Activated CD8-positive, alpha-beta memory T cell treated with anti-CD3 and anti-CD28 coated beads, Interleukin-2, amount 10 ng/mL, durations not matched to agents 7 days and 5 days (primary cell): ENCODE measurements at regions of chr9 and their contacts with region 1.

Region 1: GRCh38 chr9:126398403-126399058 is 71.9 kb downstream of the MVB12B start:
- DNase-seq: peak; percentile 82
- ATAC-seq: peak; percentile 25
- H3K4me3 Mint-ChIP-seq: no peak overlapping the region
- H3K27ac Mint-ChIP-seq: peak overlapping the region; percentile 84
- H3K4me1 Mint-ChIP-seq: peaks cover 84% of the 10 kb centered on the region
- H3K27me3 Mint-ChIP-seq: no peaks in the 10 kb centered on the region

Region 2: GRCh38 chr9:125407974-125408900 is 990.3 kb before region 1 on chr9:
- CTCF ChIA-PET with region 1: interaction called, 10 read pairs
- DNase-seq: peak; percentile 78
- ATAC-seq: peak; percentile 85
- H3K4me3 Mint-ChIP-seq: peak overlapping the region; percentile 38
- H3K27ac Mint-ChIP-seq: no peak overlapping the region
- H3K4me1 Mint-ChIP-seq: peaks cover 12% of the 10 kb centered on the region
- H3K27me3 Mint-ChIP-seq: peaks cover 22% of the 10 kb centered on the region

Region 3: GRCh38 chr9:126307322-126308061 is 91.0 kb before region 1 on chr9:
- CTCF ChIA-PET with region 1: interaction called, 107 read pairs
- DNase-seq: peak; percentile 30
- ATAC-seq: no peak
- H3K4me3 Mint-ChIP-seq: no peak overlapping the region
- H3K27ac Mint-ChIP-seq: peak overlapping the region; percentile 2
- H3K4me1 Mint-ChIP-seq: peaks cover 11% of the 10 kb centered on the region
- H3K27me3 Mint-ChIP-seq: peaks cover 2% of the 10 kb centered on the region

Region 4: DNA sequence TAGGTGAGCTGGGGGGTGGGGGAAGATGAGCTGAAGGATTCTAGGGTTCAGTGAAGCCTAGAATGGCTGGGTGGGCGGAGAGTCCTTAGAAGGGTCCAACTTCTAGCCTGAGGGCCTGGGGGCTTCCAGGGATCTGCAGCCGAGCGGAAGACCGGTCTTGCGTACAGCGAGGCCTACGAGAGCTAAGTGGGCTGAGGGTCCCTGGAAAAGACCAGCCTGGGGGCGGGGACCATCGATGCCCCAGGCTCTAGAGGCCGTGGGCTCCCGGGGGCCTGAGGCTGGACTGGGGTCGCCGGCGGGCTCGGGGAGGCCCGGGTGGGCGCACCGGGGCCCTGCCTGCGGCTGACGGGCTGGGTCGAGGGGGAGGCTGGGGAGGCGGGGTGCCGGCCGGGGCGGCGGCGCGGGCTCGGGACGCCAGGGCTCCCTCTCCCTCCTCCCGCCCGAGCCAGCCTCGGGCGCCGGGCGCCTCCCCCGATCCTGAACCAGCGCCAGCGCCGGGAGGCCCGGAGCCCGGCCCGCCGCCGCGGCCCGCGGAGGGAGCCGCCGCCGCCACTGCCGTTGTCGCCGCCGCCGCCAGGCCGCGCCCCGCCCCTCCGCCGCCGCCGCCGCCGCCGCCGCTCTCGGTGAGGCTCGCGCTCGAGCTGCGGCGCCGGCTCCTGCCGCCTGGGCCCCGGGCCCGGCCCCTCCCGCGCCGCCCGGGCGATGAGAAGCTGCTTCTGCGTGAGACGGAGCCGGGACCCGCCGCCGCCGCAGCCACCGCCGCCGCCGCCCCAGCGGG is 72.1 kb before region 1 on chr9 and contains the start of gene MVB12B:
- CTCF ChIA-PET with region 1: interaction called, 106 read pairs
- DNase-seq: peak; percentile 47
- ATAC-seq: peak; percentile 43
- H3K4me3 Mint-ChIP-seq: peak within 1 kb of the TSS; percentile 86
- H3K27ac Mint-ChIP-seq: peak within 1 kb of the TSS; percentile 90
- H3K4me1 Mint-ChIP-seq: peaks cover 49% of the 10 kb centered on the region
- H3K27me3 Mint-ChIP-seq: no peaks in the 10 kb centered on the region
- total RNA-seq, gene MVB12B: 39.2 to 57.0 TPM

Region 5: DNA sequence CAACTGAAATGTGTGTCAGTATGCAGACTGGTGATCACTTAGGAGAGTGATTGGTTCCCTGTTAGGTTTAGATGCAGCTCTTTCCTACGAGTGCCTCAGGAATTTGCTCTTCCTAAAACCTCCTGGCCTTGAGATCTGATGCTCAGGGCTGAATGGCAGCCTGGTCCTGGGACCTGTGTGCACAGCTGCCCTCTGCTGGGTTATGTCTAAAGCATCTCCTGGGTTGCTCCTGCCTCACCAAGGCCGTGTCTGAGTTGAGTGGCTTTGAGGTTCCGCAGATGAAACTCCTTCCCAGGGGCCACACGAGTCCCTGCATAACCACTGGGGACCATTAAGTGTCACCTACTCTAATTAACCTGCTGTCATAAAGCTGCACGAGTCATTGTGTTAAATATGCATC is 12.4 kb before region 1 on chr9:
- CTCF ChIA-PET with region 1: interaction called, 11 read pairs
- DNase-seq: no peak
- ATAC-seq: peak; percentile 64
- H3K4me3 Mint-ChIP-seq: no peak overlapping the region
- H3K27ac Mint-ChIP-seq: no peak overlapping the region
- H3K4me1 Mint-ChIP-seq: peaks cover 60% of the 10 kb centered on the region
- H3K27me3 Mint-ChIP-seq: no peaks in the 10 kb centered on the region

Region 6: GRCh38 chr9:126431077-126431742 is 32.7 kb after region 1 on chr9:
- CTCF ChIA-PET with region 1: interaction called, 13 read pairs
- DNase-seq: no peak
- ATAC-seq: no peak
- H3K4me3 Mint-ChIP-seq: no peak overlapping the region
- H3K27ac Mint-ChIP-seq: no peak overlapping the region
- H3K4me1 Mint-ChIP-seq: no peaks in the 10 kb centered on the region
- H3K27me3 Mint-ChIP-seq: no peaks in the 10 kb centered on the region

Region 7: DNA sequence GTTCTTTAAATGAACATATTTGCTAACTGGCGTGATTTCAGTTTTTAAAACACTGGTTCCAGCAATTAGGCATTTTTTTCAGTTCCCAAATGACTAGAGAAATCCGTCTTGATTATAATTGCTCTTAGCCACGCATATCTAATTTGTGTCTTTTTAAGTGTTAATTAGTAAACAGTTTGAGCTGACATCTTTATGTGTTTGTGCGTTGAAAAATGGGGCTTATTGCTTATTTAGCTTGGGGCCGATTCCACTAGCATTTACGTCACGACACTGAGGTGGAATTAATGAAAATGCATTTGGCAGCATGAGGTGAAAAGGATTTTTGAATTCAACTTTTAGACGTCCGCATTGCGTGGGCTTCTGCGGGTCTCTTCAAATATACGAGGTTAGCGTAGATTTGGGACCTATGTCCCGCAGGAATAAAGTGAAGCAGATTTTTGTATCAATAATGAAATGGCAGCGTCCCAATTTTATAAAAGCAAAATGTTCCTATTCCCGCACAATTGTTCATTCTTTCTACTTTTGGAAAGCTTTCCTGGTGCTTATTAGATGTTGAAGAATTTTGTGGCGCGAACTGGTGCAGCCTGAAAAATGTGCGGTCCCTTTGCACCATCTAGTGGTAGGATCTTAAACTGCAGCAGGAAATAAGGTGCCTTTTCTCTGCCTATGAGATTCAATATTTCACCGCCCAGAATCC is 92.5 kb after region 1 on chr9:
- CTCF ChIA-PET with region 1: interaction called, 84 read pairs
- DNase-seq: peak; percentile 66
- ATAC-seq: no peak
- H3K4me3 Mint-ChIP-seq: no peak overlapping the region
- H3K27ac Mint-ChIP-seq: no peak overlapping the region
- H3K4me1 Mint-ChIP-seq: peaks cover 16% of the 10 kb centered on the region
- H3K27me3 Mint-ChIP-seq: no peaks in the 10 kb centered on the region